H1 (cell line): ENCODE measurements at regions of chr2 and their contacts with region 1.

Region 1: DNA sequence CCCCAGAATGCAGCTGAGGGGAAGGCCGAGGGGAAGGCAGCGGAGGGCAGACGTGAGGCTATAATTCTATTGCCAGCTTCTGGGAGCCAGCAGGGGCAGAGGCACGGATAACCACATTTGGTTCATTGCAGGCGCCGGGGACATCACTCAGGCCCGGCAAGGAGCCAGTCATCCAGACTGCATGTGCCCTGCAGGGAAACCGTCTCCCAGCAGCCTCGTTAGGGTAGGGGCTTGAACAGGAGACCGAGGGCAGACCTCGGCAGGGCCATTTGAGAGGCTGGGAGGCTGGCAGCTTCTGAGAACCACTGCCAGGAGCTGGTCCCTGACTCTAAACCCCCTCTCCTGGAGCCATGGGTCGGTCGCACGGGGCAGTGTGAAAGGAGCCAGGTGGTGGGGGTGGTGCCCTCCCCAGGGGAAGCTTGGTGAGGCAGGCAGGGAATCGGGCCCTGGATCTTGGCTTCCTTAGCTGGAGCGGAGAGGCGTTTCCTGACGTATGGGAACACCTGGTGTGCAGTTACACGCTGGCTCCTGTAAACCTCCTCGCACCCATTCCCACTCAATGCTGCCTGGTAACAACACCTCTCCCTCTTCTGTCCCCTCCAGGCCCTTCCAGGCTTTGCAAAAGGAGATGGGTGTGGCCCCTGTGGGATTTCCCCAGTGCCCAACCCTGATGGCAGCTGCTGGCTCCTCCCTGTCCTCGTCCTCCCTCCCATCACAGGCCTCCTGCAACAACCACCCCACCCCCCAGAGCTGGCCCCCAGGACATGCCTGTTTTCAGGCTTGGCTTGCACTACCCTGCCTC is 24.6 kb downstream of the ADRA2B start:
- DNase-seq: peak in 1 of 2 experiments; percentile 54
- H3K4me3 ChIP-seq: no peak overlapping the region
- H3K27ac ChIP-seq: no peak overlapping the region
- H3K4me1 ChIP-seq: peaks cover 3 to 24% (median 10%) of the 10 kb centered on the region in 4 experiments
- H3K27me3 ChIP-seq: no peaks in the 10 kb centered on the region; a peak in 1 of 7 replicates
- CTCF ChIP-seq: no peak
- EP300 ChIP-seq: no peak
- POLR2A ChIP-seq: no peak
- RAD21 ChIP-seq: no peak

Region 2: DNA sequence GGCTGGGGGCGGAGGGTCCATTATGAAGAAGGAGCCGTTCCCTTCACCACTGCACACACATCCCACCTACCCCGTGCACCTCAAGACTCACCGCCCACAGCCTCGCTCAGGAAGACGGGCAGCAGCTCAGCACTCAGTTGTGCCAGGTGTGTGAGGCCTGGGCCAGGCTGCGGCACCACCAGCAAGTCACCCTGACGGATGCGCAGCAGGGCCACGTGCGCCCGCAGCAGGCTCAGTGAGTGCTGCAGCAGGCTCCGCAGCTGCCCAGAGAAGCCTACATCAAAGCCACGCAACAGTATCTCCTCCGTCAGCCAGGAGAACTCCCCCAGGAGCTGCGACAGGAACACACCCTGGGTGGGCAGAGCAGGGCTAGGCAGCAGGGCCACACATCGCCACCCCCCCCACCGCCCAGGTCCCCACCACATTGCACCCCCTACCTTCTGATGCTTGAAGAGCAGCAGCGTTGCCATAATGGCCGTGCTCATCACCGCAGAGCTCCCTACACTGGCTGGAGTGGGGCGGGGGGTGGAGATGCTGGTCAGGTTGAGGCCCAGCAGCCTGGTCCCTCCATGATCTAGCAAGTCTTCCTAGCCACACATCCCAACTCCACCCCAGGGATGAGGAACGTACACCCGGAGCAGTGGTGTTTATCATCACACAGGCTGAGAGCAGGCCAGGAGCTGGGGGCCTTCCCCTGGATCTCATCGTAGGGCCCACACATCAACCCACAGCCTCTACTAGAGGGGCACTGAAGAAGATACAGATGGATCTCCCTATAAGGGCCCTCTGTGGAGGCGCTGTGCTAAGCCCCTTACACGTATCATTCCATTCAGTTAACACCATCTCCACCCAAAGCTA is 67.2 kb before region 1 on chr2:
- CTCF ChIA-PET with region 1: interaction called, 11 read pairs
- POLR2A ChIA-PET with region 1: no interaction called
- DNase-seq: no peak
- H3K4me3 ChIP-seq: no peak overlapping the region
- H3K27ac ChIP-seq: no peak overlapping the region
- H3K4me1 ChIP-seq: no peaks in the 10 kb centered on the region
- H3K27me3 ChIP-seq: no peaks in the 10 kb centered on the region
- CTCF ChIP-seq: peak in 2 of 3 experiments; percentile 19 to 20; a peak in 3 of 4 replicates
- EP300 ChIP-seq: no peak
- POLR2A ChIP-seq: no peak
- RAD21 ChIP-seq: 0 out of 4 replicates have a peak, but pooled peaks of 1 of the 2 experiments have one; percentile 7

Region 3: DNA sequence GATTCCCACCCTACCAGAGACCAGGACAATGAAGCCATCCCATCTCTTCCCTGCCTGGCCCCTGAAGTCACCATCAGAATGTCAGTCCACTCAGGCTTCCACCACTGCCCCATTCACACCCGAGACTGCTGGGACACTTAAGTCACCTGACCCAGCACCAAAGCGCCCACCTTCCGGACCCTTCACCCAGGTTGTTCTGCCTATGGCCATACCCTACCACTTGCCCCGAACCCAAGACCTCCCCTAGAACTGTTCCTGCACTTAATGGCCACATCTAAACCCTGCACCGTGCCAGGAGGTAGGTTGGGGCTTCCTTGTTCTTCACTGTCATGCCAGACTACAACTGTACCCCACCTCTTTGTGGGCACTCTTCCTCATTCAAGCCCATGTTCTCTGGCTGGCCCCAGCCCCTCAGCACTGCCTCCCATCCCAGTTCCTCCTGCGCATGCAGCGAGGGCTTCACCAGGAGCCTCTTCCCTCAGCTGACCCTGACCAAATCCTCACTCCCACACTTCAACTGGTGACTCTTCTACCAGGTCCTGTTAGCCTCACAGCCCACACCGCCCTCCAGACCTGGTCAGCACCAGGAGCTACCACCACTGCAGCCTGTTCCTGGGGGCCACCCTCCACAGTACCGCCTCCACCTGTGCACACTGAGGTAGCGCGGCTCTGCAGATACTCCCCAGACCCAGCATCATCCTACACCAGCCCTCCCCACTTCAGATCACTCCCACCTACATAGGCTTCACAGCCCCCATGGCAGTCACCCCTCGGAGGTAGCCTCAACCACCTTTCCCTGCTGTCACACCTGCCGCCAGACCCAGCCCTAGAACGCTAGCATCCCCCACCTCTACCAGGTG is 32.9 kb after region 1 on chr2:
- CTCF ChIA-PET with region 1: interaction called, 12 read pairs
- POLR2A ChIA-PET with region 1: no interaction called
- DNase-seq: no peak
- H3K4me3 ChIP-seq: no peak overlapping the region
- H3K27ac ChIP-seq: no peak overlapping the region
- H3K4me1 ChIP-seq: peaks cover 0 to 4% (median 2%) of the 10 kb centered on the region in 4 experiments; a peak in 3 of 7 replicates
- H3K27me3 ChIP-seq: no peaks in the 10 kb centered on the region; a peak in 3 of 7 replicates
- CTCF ChIP-seq: no peak
- EP300 ChIP-seq: no peak
- POLR2A ChIP-seq: no peak
- RAD21 ChIP-seq: no peak